Activated CD8-positive, alpha-beta T cell treated with anti-CD3 and anti-CD28 coated beads for 36 hours (primary cell): ENCODE measurements at regions of chr5 and their contacts with region 1.

Region 1: GRCh38 chr5:55172051-55172899 is 702 bp downstream of the CDC20B start:
- DNase-seq: peak; percentile 70
- ATAC-seq: peak; percentile 77
- H3K4me3 Mint-ChIP-seq: peak overlapping the region; percentile 83
- H3K27ac Mint-ChIP-seq: no peak overlapping the region
- H3K4me1 Mint-ChIP-seq: peaks cover 35% of the 10 kb centered on the region
- H3K27me3 Mint-ChIP-seq: peaks cover 49% of the 10 kb centered on the region
- CTCF ChIP-seq: peak; percentile 83

Region 2: GRCh38 chr5:54905943-54906537 is 266.2 kb before region 1 on chr5:
- CTCF ChIA-PET with region 1: interaction called, 14 read pairs
- POLR2A ChIA-PET with region 1: no interaction called
- intact Hi-C with region 1: no loop called
- DNase-seq: peak; percentile 90
- ATAC-seq: no peak
- H3K4me3 Mint-ChIP-seq: no peak overlapping the region
- H3K27ac Mint-ChIP-seq: no peak overlapping the region
- H3K4me1 Mint-ChIP-seq: peaks cover 17% of the 10 kb centered on the region
- H3K27me3 Mint-ChIP-seq: peaks cover 36% of the 10 kb centered on the region
- CTCF ChIP-seq: peak; percentile 88

Region 3: DNA sequence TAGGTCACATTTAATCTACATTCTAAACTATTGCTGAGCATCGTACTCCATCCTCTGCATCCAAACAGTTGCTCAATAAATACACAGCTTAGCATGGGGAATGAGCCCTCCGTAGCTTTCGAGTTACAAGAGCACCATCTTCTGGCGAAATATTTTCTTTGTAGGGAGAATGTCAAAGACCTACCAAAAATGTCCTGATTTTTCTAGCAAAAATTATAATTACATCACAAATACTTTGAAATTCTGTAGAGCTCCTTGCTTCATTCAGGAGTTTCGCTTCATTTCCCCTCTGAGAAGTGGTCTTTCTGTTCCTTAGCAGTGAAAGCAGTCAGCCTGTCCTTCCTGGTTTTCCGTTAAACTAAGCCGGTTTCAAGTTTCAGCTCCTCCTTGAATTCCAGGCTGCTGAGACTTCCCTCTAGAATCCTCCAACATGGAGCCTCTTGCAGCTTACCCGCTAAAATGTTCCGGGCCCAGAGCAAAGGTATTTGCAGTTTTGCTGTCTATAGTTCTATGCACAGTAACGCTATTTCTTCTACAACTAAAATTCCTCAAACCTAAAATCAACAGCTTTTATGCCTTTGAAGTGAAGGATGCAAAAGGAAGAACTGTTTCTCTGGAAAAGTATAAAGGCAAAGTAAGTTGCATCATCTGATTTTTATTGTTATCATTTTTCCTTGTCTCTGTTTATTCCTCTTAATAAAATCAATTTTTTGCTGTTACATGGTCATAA is 12.3 kb before region 1 on chr5 and contains the start of gene GPX8:
- CTCF ChIA-PET with region 1: interaction called, 17 read pairs
- POLR2A ChIA-PET with region 1: interaction called, 4 read pairs
- intact Hi-C with region 1: no loop called
- DNase-seq: peak; percentile 20
- ATAC-seq: peak; percentile 37
- H3K4me3 Mint-ChIP-seq: no peak within 1 kb of the TSS
- H3K27ac Mint-ChIP-seq: no peak within 1 kb of the TSS
- H3K4me1 Mint-ChIP-seq: no peaks in the 10 kb centered on the region
- H3K27me3 Mint-ChIP-seq: peaks cover 20% of the 10 kb centered on the region
- CTCF ChIP-seq: peak; percentile 67
- total RNA-seq, gene GPX8: not detected

Region 4: DNA sequence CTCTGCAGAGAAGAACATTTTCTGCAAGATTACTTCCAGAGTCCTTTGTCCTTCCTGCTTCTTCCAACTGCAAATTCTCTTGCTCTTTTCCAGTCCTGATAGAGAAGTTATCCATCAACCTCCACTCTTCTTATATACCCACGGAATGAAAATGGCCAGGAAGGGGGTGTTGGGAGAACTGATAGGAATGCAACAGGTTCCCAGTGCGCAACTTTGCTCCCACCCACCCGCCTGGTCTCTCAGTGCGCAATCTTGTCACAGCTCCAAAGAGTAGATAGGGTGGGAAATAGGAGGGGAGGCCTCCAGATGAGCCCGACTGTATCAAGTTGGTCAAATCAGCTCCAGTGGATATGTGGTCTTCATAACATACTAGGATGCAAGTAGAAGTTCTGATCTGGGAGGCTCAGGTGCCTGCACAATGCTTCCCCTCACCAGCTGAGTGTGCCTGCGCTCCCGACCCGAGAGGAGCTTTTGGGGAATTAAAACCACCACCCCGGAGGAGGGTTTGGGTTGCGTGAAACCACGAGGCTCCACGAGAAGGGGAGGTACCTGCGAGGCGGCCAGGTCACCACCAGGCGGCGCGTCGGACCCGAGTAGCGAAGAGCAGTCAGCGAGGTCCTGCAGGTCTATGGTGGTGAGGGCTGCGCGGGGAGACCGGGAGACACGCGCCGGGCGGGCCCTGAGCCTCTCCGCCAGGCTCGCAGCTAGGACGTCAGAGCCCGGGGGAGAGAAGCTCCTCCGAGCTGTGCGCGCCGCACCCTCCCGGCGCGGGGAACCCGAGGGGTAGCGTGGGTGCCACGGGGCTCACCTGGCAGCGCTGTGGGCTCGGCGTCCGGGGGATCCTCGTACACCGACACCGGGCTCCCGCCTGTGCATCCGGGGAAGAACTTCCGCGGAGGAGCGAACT is 54.0 kb after region 1 on chr5:
- CTCF ChIA-PET with region 1: interaction called, 51 read pairs
- POLR2A ChIA-PET with region 1: no interaction called
- intact Hi-C with region 1: loop called (anchors 5 kb)
- DNase-seq: peak; percentile 87
- ATAC-seq: peak; percentile 76
- H3K4me3 Mint-ChIP-seq: peak overlapping the region; percentile 51
- H3K27ac Mint-ChIP-seq: no peak overlapping the region
- H3K4me1 Mint-ChIP-seq: peaks cover 28% of the 10 kb centered on the region
- H3K27me3 Mint-ChIP-seq: peaks cover 83% of the 10 kb centered on the region
- CTCF ChIP-seq: peak; percentile 84

Region 5: GRCh38 chr5:55232985-55233928 is 61.0 kb after region 1 on chr5 and contains the start of gene CCNO:
- CTCF ChIA-PET with region 1: interaction called, 51 read pairs
- POLR2A ChIA-PET with region 1: no interaction called
- intact Hi-C with region 1: loop called (anchors 5 kb)
- DNase-seq: peak; percentile 73
- ATAC-seq: peak; percentile 88
- H3K4me3 Mint-ChIP-seq: peak within 1 kb of the TSS; percentile 75
- H3K27ac Mint-ChIP-seq: no peak within 1 kb of the TSS
- H3K4me1 Mint-ChIP-seq: peaks cover 19% of the 10 kb centered on the region
- H3K27me3 Mint-ChIP-seq: peaks cover 70% of the 10 kb centered on the region
- CTCF ChIP-seq: no peak
- total RNA-seq, gene CCNO: not detected

Region 6: GRCh38 chr5:55307383-55308253 is 135.3 kb after region 1 on chr5 and contains the starts of genes DHX29 and MTREX:
- CTCF ChIA-PET with region 1: interaction called, 5 read pairs
- POLR2A ChIA-PET with region 1: no interaction called
- intact Hi-C with region 1: loop called (anchors 5 kb)
- DNase-seq: peak; percentile 91
- ATAC-seq: peak; percentile 93
- H3K4me3 Mint-ChIP-seq: no peak within 1 kb of the TSS
- H3K27ac Mint-ChIP-seq: no peak within 1 kb of the TSS
- H3K4me1 Mint-ChIP-seq: peaks cover 33% of the 10 kb centered on the region
- H3K27me3 Mint-ChIP-seq: no peaks in the 10 kb centered on the region
- CTCF ChIP-seq: no peak
- total RNA-seq, gene DHX29: 11.6 to 13.7 TPM
- total RNA-seq, gene MTREX: 88.9 to 93.4 TPM

Region 7: DNA sequence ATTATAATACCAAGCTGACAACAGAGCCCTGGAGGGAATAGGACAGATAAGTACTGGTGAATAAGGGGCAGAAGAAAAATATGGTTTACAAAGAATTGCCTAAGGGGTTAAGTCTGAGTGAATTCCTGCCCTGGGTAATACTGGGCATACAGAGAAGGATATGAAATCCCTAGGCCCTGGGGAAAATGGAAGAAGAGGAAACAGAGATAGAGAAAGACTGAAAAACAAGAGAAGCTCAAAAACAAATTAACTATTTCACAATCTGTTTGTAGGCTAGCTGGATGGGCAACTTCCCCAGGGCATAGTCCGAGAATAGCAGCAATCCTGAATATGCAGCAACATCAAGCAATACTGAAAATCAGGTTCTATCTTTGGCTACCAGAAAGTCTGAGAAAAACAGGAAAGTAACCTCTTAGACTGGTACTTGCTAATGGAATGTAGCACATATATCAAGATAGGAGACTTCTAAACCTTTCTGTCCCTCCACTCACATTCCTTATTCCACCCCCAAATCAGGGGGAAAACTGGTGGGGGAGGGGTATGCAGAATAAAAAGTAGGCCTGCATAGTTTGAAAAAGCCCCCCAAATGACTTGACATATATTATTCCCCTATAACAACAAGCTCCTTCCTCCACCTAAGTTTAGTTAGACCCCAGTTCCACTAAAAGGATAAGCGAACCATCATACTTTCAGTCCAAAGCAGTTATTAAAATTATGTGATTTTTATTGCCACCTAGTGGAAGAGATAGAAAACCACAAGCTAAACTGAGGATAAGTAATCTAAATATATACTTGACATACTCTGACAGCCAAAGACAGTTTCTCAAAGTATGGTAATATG is 519.2 kb after region 1 on chr5:
- CTCF ChIA-PET with region 1: interaction called, 13 read pairs
- POLR2A ChIA-PET with region 1: no interaction called
- intact Hi-C with region 1: loop called (anchors 5 kb)
- DNase-seq: no peak
- ATAC-seq: peak; percentile 69
- H3K4me3 Mint-ChIP-seq: no peak overlapping the region
- H3K27ac Mint-ChIP-seq: no peak overlapping the region
- H3K4me1 Mint-ChIP-seq: peaks cover 2% of the 10 kb centered on the region
- H3K27me3 Mint-ChIP-seq: no peaks in the 10 kb centered on the region
- CTCF ChIP-seq: peak; percentile 66